Cardiac septum (tissue), 1 donor: ENCODE measurements at regions of chr22 and their contacts with region 1.

Region 1: DNA sequence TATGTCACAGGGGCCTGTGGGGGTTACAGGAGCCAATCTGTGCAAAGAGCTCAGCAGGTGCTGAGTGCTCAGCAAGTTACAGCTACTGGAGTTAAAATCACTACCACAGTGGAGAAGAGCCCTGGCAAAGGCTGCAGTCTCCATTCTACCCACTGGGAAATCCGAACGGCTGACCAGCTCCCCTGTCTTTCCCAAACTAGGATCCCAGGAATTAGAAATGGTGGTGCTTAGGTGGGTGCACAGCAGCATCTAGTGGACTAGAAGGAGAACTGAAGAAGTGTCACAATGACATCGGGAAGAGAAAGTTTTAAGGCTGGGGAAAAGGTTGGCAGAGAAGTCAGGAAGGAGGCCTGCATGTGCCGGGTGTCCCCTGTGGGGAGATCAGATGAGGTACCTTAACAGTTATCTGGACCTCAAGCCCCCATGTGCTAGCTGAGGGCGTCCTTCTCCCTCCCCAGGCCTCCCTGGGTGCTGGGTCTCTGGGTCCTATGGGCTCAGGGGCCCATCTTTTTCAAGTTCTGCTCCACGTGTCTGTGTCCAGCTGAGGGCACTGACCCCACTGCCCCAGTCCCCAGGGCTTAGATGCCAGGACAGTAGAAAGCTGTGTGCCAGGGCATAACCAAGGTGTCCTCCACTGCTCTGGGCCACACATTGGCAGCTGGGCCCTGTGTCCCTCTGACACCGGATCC is 1.9 kb downstream of the PIWIL3 start:
- DNase-seq: no peak

Region 2: GRCh38 chr22:24845041-24845898 is 72.6 kb after region 1 on chr22:
- intact Hi-C with region 1: loop called (anchors 5 kb)
- DNase-seq: no peak